Heart left ventricle (tissue), 16 donors: ENCODE measurements at regions of chr18 and their contacts with region 1.

Region 1: DNA sequence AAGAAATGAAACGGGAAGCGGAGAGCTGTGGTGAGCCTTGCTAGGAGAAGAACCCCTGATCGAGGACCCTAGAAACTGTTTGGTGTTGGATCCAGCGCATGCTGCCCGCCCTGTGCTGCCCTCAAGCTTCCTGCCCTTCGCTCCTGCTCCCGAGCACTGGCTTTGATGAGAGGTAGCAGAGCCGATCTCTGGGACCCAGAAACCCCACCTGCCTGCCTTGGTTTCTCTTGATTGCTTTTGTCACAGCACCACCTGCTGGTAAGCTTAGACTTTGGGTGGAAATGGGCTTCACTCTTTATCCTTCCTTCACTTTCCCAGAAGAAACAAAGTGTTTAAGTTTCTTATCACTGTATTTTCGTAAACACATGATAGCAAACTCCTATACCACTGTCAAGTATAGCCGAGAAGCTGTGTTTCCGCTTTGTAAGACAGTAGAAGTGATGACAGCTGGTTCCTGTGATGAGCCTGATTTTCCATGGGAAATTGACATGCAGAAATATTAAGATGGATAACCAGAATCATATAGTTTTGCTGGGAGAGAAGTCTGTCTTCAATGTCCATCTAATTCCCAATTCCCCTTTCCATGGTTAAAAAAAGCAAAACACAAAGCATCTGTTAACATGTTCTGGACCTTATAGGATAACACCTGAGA is 267.4 kb downstream of the PHLPP1 start:
- DNase-seq: peak in 3 of 5 donors; percentile 45 to 60 (median 56)
- ATAC-seq: peak; percentile 32 to 82 (median 66)
- H3K4me3 ChIP-seq: peak overlapping the region in 9 of 12 donors; percentile 21 to 57 (median 44)
- H3K27ac ChIP-seq: no peak overlapping the region
- H3K4me1 ChIP-seq: peaks cover 0 to 11% (median 3%) of the 10 kb centered on the region in 12 donors
- H3K27me3 ChIP-seq: no peaks in the 10 kb centered on the region
- CTCF ChIP-seq: peak; percentile 64 to 87 (median 78)
- POLR2A ChIP-seq: no peak

Region 2: DNA sequence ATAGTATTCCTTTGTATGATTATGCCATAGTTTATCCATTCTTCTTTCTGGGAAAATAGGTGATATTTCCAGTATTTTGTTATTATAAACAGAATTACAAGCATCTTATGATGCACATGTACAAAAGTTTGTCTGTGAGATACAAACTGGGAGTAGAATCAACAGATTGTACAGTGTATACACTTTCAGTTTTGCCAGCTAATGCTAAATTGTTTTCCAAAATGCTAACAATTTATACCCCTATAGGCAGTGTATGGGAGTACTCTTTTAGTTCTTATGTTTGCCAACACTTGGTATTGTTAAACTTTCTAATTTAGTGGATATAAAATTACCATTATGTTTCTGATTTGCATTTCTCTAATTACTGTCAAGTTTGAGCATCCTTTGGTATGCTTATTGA is 688.7 kb before region 1 on chr18:
- intact Hi-C with region 1: no loop called
- DNase-seq: no peak
- ATAC-seq: no peak
- H3K4me3 ChIP-seq: no peak overlapping the region
- H3K27ac ChIP-seq: no peak overlapping the region
- H3K4me1 ChIP-seq: peaks cover 0 to 12% (median 0%) of the 10 kb centered on the region in 12 donors
- H3K27me3 ChIP-seq: no peaks in the 10 kb centered on the region
- CTCF ChIP-seq: no peak
- POLR2A ChIP-seq: no peak

Region 3: DNA sequence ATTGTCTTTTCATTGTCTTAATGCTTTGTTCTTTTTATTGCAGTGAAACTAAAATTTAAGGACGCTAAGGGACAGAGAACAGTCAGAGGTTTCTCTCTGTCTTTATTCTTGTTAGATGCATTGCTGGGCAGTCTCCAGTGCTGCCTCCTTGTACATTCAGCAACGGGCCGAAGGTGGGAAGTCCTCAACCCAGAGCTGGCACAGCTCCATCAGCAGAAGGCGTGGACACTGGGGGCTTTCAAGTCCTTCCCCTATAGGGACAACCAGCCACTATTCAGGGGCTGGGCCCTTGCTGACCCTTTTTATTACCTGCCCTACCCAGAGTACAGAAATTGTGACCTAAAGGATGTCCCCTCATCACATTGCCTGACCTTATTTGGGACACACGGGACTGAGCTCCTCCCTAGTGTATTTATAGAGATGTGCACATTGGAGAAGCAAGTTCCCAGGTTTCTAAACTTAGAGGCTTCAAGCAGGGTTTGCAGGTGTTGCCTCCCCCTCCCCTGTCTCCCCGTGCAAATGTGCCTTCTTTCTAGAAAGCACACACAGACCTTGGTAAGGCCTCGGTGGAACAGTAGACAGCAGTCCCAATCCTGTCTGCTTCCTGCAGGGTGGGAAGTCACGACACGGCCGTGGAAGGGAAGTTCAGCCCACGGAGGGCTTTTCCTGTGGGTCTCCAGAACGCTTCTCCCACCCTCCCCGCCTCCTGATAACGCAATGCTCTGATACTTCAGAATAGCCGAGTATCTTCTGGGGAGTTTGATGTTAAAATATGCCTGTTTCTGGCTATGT is 391.7 kb before region 1 on chr18:
- intact Hi-C with region 1: loop called in 8 of 10 experiments (anchors 1 to 2 kb)
- DNase-seq: no peak
- ATAC-seq: peak; percentile 44 to 68 (median 62)
- H3K4me3 ChIP-seq: peak overlapping the region in 1 of 12 donors; percentile 9
- H3K27ac ChIP-seq: peak overlapping the region in 2 of 12 donors; percentile 31 to 59
- H3K4me1 ChIP-seq: peaks cover 0 to 22% (median 10%) of the 10 kb centered on the region in 12 donors
- H3K27me3 ChIP-seq: peaks cover 0 to 8% (median 0%) of the 10 kb centered on the region in 9 donors
- CTCF ChIP-seq: no peak
- POLR2A ChIP-seq: no peak

Region 4: DNA sequence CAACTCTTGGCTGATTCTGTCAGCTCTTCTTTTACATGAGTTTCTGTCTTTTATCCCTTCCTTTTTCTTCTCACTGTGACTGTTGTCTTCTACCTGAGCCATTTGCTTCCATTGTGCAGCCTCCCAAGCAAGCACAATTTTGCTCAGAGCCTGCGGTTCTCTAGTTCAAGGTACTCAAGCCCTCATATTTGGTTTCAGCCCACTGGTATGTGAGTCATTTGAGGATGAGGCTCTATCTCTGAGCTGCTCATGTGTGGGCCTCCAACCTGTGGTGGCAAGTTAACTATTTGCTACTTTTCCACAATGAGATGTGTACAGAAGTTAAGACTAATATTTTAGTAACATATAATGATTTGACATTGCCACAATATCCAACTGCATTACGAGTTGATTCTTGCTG is 84.4 kb before region 1 on chr18:
- intact Hi-C with region 1: no loop called
- DNase-seq: no peak
- ATAC-seq: no peak
- H3K4me3 ChIP-seq: no peak overlapping the region
- H3K27ac ChIP-seq: no peak overlapping the region
- H3K4me1 ChIP-seq: peaks cover 0 to 6% (median 0%) of the 10 kb centered on the region in 12 donors
- H3K27me3 ChIP-seq: no peaks in the 10 kb centered on the region
- CTCF ChIP-seq: no peak
- POLR2A ChIP-seq: no peak

Region 5: GRCh38 chr18:63775166-63775730 is 792.5 kb after region 1 on chr18 and contains the start of gene SERPINB7:
- intact Hi-C with region 1: no loop called
- DNase-seq: no peak
- ATAC-seq: no peak
- H3K4me3 ChIP-seq: no peak within 1 kb of the TSS
- H3K27ac ChIP-seq: no peak within 1 kb of the TSS
- H3K4me1 ChIP-seq: no peaks in the 10 kb centered on the region
- H3K27me3 ChIP-seq: no peaks in the 10 kb centered on the region
- CTCF ChIP-seq: no peak
- POLR2A ChIP-seq: no peak
- total RNA-seq, gene SERPINB7: 1.4 TPM in 1 of 9 donors, not detected in the others